CD8-positive, alpha-beta memory T cell (primary cell): ENCODE measurements at regions of chr17 and their contacts with region 1.

Region 1: GRCh38 chr17:50865984-50866774 is at the start of gene TOB1:
- DNase-seq: peak; percentile 95 to 97 (median 95)
- H3K4me3 ChIP-seq: peak within 1 kb of the TSS; percentile 97
- H3K4me3 Mint-ChIP-seq: peak within 1 kb of the TSS; percentile 96 to 99 (median 98)
- H3K27ac ChIP-seq: peak within 1 kb of the TSS; percentile 98
- H3K27ac Mint-ChIP-seq: peak within 1 kb of the TSS; percentile 99 to 100 (median 99)
- H3K4me1 ChIP-seq: peaks cover 62% of the 10 kb centered on the region
- H3K4me1 Mint-ChIP-seq: peaks cover 54 to 66% (median 63%) of the 10 kb centered on the region in 3 donors
- H3K27me3 ChIP-seq: no peaks in the 10 kb centered on the region
- H3K27me3 Mint-ChIP-seq: peaks cover 0 to 3% of the 10 kb centered on the region in 2 donors
- total RNA-seq, gene TOB1: 32.6 to 34.5 TPM

Region 2: GRCh38 chr17:50783193-50783660 is 83.0 kb before region 1 on chr17:
- CTCF ChIA-PET with region 1: interaction called, 5 read pairs
- POLR2A ChIA-PET with region 1: interaction called, 12 read pairs
- DNase-seq: peak; percentile 67 to 81 (median 70)
- H3K4me3 ChIP-seq: no peak overlapping the region
- H3K4me3 Mint-ChIP-seq: peak overlapping the region in 4 of 7 donors; percentile 10 to 68 (median 34)
- H3K27ac ChIP-seq: no peak overlapping the region
- H3K27ac Mint-ChIP-seq: peak overlapping the region in 4 of 8 donors; percentile 16 to 65 (median 50)
- H3K4me1 ChIP-seq: peaks cover 15% of the 10 kb centered on the region
- H3K4me1 Mint-ChIP-seq: peaks cover 31 to 43% (median 41%) of the 10 kb centered on the region in 3 donors
- H3K27me3 ChIP-seq: no peaks in the 10 kb centered on the region
- H3K27me3 Mint-ChIP-seq: peaks cover 4 to 11% of the 10 kb centered on the region in 2 donors

Region 3: DNA sequence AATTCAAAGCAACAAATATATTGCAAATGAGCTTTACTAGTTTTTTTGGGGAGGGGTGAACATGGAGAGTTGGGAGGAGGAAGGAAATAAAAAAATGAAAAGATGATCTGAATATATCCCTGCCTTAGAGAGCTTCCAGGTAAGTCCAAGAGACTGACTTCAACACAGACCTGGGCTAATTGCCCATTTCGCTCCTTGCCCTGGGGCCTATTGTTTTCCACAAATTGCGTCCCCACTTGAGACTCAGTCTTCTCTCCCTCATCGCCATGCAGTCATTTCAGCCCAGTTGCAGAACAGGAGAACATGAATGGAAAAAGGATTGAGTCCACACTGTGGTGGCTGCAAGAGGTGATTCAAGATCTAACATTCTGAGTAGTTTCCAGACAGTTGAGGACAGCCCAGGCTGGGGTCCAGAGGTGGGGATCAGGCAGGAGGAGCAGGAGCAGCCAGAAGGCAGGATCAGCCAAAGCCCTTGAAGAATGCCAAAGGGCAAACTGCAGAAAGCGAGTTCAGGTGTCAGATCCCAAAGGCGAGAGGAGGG is 21.6 kb after region 1 on chr17:
- CTCF ChIA-PET with region 1: interaction called, 6 read pairs
- POLR2A ChIA-PET with region 1: interaction called, 16 read pairs
- DNase-seq: no peak
- H3K4me3 ChIP-seq: no peak overlapping the region
- H3K4me3 Mint-ChIP-seq: peak overlapping the region in 1 of 7 donors; percentile 19
- H3K27ac ChIP-seq: no peak overlapping the region
- H3K27ac Mint-ChIP-seq: peak overlapping the region in 3 of 8 donors; percentile 4 to 47 (median 5)
- H3K4me1 ChIP-seq: peaks cover 13% of the 10 kb centered on the region
- H3K4me1 Mint-ChIP-seq: peaks cover 20 to 28% (median 25%) of the 10 kb centered on the region in 3 donors
- H3K27me3 ChIP-seq: no peaks in the 10 kb centered on the region
- H3K27me3 Mint-ChIP-seq: no peaks in the 10 kb centered on the region

Region 4: GRCh38 chr17:50919321-50920085 is 53.3 kb after region 1 on chr17:
- CTCF ChIA-PET with region 1: interaction called, 3 read pairs
- POLR2A ChIA-PET with region 1: interaction called, 10 read pairs
- DNase-seq: peak; percentile 77 to 93 (median 86)
- H3K4me3 ChIP-seq: peak overlapping the region; percentile 26
- H3K4me3 Mint-ChIP-seq: peak overlapping the region; percentile 6 to 80 (median 49)
- H3K27ac ChIP-seq: peak overlapping the region; percentile 69
- H3K27ac Mint-ChIP-seq: peak overlapping the region; percentile 81 to 99 (median 98)
- H3K4me1 ChIP-seq: peaks cover 34% of the 10 kb centered on the region
- H3K4me1 Mint-ChIP-seq: peaks cover 22 to 37% (median 24%) of the 10 kb centered on the region in 3 donors
- H3K27me3 ChIP-seq: no peaks in the 10 kb centered on the region
- H3K27me3 Mint-ChIP-seq: peaks cover 0 to 1% of the 10 kb centered on the region in 2 donors

Region 5: GRCh38 chr17:50944054-50944901 is 78.1 kb after region 1 on chr17:
- CTCF ChIA-PET with region 1: interaction called, 38 read pairs
- POLR2A ChIA-PET with region 1: interaction called, 54 read pairs
- DNase-seq: peak; percentile 63 to 83 (median 72)
- H3K4me3 ChIP-seq: peak overlapping the region; percentile 72
- H3K4me3 Mint-ChIP-seq: peak overlapping the region; percentile 62 to 90 (median 78)
- H3K27ac ChIP-seq: peak overlapping the region; percentile 82
- H3K27ac Mint-ChIP-seq: peak overlapping the region; percentile 70 to 94 (median 86)
- H3K4me1 ChIP-seq: peaks cover 34% of the 10 kb centered on the region
- H3K4me1 Mint-ChIP-seq: peaks cover 18 to 38% (median 37%) of the 10 kb centered on the region in 3 donors
- H3K27me3 ChIP-seq: no peaks in the 10 kb centered on the region
- H3K27me3 Mint-ChIP-seq: no peaks in the 10 kb centered on the region

Region 6: GRCh38 chr17:51120739-51121617 is 254.8 kb after region 1 on chr17 and contains the start of gene SPAG9:
- CTCF ChIA-PET with region 1: no interaction called
- POLR2A ChIA-PET with region 1: interaction called, 13 read pairs
- DNase-seq: peak; percentile 90 to 93 (median 91)
- H3K4me3 ChIP-seq: peak within 1 kb of the TSS; percentile 79
- H3K4me3 Mint-ChIP-seq: peak within 1 kb of the TSS; percentile 97 to 99 (median 97)
- H3K27ac ChIP-seq: peak within 1 kb of the TSS; percentile 94
- H3K27ac Mint-ChIP-seq: peak within 1 kb of the TSS; percentile 96 to 100 (median 99)
- H3K4me1 ChIP-seq: peaks cover 35% of the 10 kb centered on the region
- H3K4me1 Mint-ChIP-seq: peaks cover 45 to 55% (median 54%) of the 10 kb centered on the region in 3 donors
- H3K27me3 ChIP-seq: no peaks in the 10 kb centered on the region
- H3K27me3 Mint-ChIP-seq: peaks cover 0 to 3% of the 10 kb centered on the region in 2 donors
- total RNA-seq, gene SPAG9: 40.6 to 43.0 TPM